AG04450 (cell line): ENCODE measurements at regions of chr11 and their contacts with region 1.

Region 1: GRCh38 chr11:125141686-125142535 is 22.6 kb upstream of the PKNOX2 start:
- DNase-seq: no peak
- H3K4me3 ChIP-seq: no peak overlapping the region
- H3K27ac ChIP-seq: no peak overlapping the region
- H3K27me3 ChIP-seq: peaks cover 10% of the 10 kb centered on the region
- CTCF ChIP-seq: peak; percentile 97

Region 2: GRCh38 chr11:124961972-124962609 is 179.8 kb before region 1 on chr11:
- CTCF ChIA-PET with region 1: interaction called, 25 read pairs
- POLR2A ChIA-PET with region 1: no interaction called
- DNase-seq: peak; percentile 74
- H3K4me3 ChIP-seq: no peak overlapping the region
- H3K27ac ChIP-seq: no peak overlapping the region
- H3K27me3 ChIP-seq: no peaks in the 10 kb centered on the region
- CTCF ChIP-seq: peak; percentile 79

Region 3: GRCh38 chr11:125091247-125091876 is 50.5 kb before region 1 on chr11:
- CTCF ChIA-PET with region 1: interaction called, 185 read pairs
- POLR2A ChIA-PET with region 1: interaction called, 4 read pairs
- DNase-seq: peak; percentile 58
- H3K4me3 ChIP-seq: no peak overlapping the region
- H3K27ac ChIP-seq: peak overlapping the region; percentile 52
- H3K27me3 ChIP-seq: no peaks in the 10 kb centered on the region
- CTCF ChIP-seq: peak; percentile 80

Region 4: GRCh38 chr11:125111343-125112207 is 30.3 kb before region 1 on chr11 and contains the start of gene TMEM218:
- CTCF ChIA-PET with region 1: interaction called, 30 read pairs
- POLR2A ChIA-PET with region 1: interaction called, 3 read pairs
- DNase-seq: peak; percentile 99
- H3K4me3 ChIP-seq: peak within 1 kb of the TSS; percentile 93
- H3K27ac ChIP-seq: peak within 1 kb of the TSS; percentile 54
- H3K27me3 ChIP-seq: no peaks in the 10 kb centered on the region
- CTCF ChIP-seq: no peak
- polyA plus RNA-seq, gene TMEM218: 28.4 and 29.9 TPM in 2 replicates

Region 5: DNA sequence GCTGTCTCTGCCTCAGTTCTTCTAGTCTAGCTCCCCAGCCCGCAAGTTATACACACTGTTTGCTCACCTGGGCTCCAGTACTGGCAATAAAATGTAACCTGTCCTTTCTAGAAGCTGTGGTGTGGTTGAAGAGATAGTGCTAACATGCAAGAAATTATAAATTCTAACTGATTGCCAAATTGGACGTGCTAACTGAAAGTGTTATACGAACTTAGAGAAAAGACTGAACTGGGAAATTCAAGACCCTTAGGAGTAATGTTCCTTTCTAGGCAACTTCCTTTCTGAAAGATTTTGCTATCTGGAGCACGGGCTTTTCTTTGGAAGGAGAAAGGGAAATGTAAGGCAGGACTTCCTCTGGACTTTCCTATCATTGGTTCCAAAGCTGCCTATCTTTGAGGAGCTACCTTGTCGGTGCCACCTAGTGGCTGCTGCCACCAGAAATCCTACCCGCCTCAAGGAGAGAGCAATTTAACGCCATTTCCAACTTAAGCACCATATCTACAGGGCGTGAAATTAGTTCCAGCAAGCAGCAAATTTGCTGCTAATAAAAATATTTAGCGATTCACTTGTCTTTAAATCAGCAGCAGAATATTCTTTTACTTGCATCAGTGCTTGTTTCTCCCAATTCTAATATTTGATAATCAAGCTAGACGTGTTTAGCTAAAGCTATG is 17.8 kb before region 1 on chr11:
- CTCF ChIA-PET with region 1: interaction called, 36 read pairs
- POLR2A ChIA-PET with region 1: no interaction called
- DNase-seq: no peak
- H3K4me3 ChIP-seq: no peak overlapping the region
- H3K27ac ChIP-seq: no peak overlapping the region
- H3K27me3 ChIP-seq: no peaks in the 10 kb centered on the region
- CTCF ChIP-seq: peak; percentile 29

Region 6: DNA sequence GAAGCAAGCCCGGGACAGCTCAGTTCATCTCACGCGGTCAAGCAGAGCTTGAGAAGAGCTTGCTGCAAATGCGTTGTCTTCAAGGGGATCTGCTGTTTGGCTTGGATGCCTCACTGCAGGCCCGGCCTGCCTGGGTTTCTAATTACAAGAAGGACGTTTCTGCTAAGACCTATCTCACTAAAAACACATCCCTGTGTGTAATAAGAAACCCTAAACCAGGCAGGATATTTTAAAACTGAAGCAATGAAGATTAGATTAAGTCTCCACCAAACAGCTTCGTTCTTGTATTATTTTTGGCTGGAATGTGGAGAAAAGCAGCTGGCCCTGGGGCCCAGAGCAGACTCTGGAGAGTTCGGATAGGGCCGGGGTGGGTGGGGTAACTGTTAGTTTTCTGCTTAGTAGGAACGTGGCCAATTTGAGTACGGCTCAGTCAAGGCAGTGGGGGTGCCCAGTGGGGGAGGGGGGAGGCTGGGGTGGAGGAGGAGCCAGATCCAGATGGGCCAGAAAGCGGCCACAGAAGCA is 28.7 kb after region 1 on chr11:
- CTCF ChIA-PET with region 1: interaction called, 14 read pairs
- POLR2A ChIA-PET with region 1: no interaction called
- DNase-seq: peak; percentile 84
- H3K4me3 ChIP-seq: 0 out of 2 replicates have a peak overlapping the region, but pooled peaks have one; percentile 27
- H3K27ac ChIP-seq: peak overlapping the region; percentile 93
- H3K27me3 ChIP-seq: peaks cover 21% of the 10 kb centered on the region
- CTCF ChIP-seq: no peak

Region 7: GRCh38 chr11:125211191-125211947 is 69.5 kb after region 1 on chr11:
- CTCF ChIA-PET with region 1: no interaction called
- POLR2A ChIA-PET with region 1: no interaction called
- DNase-seq: no peak
- H3K4me3 ChIP-seq: no peak overlapping the region
- H3K27ac ChIP-seq: no peak overlapping the region
- H3K27me3 ChIP-seq: peaks cover 43% of the 10 kb centered on the region
- CTCF ChIP-seq: peak; percentile 25; the same call in 1 of the 2 replicates